ENCODE measurements at regions of chrX and their contacts with region 1.

Region 1: GRCh38 chrX:24054182-24055042 is at the start of gene EIF2S3:
- DNase-seq: peak; percentile 69 to 94 (median 86)
- ATAC-seq: peak; percentile 82
- H3K4me3 ChIP-seq: peak within 1 kb of the TSS; percentile 87 to 92
- H3K4me3 Mint-ChIP-seq: no peak within 1 kb of the TSS
- H3K27ac ChIP-seq: peak within 1 kb of the TSS; percentile 91 to 96
- H3K27ac Mint-ChIP-seq: peak within 1 kb of the TSS; percentile 99
- H3K4me1 ChIP-seq: peaks cover 3% of the 10 kb centered on the region
- H3K4me1 Mint-ChIP-seq: peaks cover 6% of the 10 kb centered on the region
- H3K27me3 ChIP-seq: no peaks in the 10 kb centered on the region
- H3K27me3 Mint-ChIP-seq: no peaks in the 10 kb centered on the region
- CTCF ChIP-seq: no peak
- total RNA-seq, gene EIF2S3: 180 to 184 TPM

Region 2: GRCh38 chrX:23667239-23668177 is 386.9 kb before region 1 on chrX and contains the start of gene PRDX4:
- CTCF ChIA-PET with region 1: no interaction called
- POLR2A ChIA-PET with region 1: no interaction called
- intact Hi-C with region 1: loop called in 1 of 2 experiments (anchors 1 kb)
- DNase-seq: peak; percentile 37 to 84 (median 64)
- ATAC-seq: peak; percentile 85
- H3K4me3 ChIP-seq: peak within 1 kb of the TSS; percentile 62 to 67
- H3K4me3 Mint-ChIP-seq: peak within 1 kb of the TSS; percentile 92
- H3K27ac ChIP-seq: peak within 1 kb of the TSS; percentile 66 to 68
- H3K27ac Mint-ChIP-seq: peak within 1 kb of the TSS; percentile 86
- H3K4me1 ChIP-seq: peaks cover 11% of the 10 kb centered on the region
- H3K4me1 Mint-ChIP-seq: peaks cover 25% of the 10 kb centered on the region
- H3K27me3 ChIP-seq: no peaks in the 10 kb centered on the region
- H3K27me3 Mint-ChIP-seq: no peaks in the 10 kb centered on the region
- CTCF ChIP-seq: no peak
- total RNA-seq, gene PRDX4: 2.2 to 3.6 TPM

Region 3: DNA sequence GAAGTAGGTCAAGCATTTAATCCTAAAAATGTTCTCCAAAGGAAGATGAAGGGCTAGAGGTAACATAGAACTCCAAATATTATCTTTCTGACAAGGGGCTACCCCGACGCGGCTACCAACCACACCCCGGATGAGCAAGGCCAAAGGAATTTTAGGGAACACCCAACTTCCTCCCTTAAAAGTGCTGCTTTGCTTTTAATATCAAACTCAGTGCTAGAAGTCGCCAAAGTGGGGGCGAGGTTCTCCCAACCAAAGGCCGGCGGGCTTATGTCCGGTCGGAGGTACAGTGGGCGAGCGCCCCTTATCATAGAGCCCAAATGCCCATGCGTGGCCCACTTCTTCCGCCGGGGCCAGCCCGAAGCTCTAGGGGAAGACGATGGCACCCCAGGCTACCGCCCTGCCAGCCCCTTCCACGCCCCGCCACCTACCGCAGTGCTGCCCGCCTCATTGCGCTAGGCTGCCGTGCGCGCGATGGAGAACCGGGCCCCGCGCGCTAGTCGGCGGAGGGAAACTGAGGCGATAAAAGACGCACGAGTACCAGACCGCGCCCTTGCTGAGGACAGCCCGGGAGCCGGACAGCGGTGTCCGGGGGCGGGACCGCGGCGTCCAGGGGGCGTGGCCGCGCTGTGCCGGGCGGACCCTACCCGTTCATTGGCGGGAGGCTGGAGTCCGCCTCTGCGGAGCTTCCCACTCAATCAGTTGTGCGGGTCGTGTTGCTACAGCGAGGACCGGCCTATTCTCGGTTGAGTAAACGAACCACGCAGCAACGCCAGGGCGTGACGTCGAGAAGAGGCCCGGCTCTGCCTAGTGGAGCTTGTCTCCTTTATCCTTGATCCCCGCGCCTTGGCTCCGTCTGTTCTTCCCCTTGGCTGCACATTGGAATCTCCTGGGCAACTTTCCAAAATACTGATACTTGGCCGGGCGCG is 311.5 kb before region 1 on chrX and contains the start of gene ACOT9:
- CTCF ChIA-PET with region 1: interaction called, 3 read pairs
- POLR2A ChIA-PET with region 1: interaction called, 6 read pairs
- intact Hi-C with region 1: loop called in 1 of 2 experiments (anchors 5 kb)
- DNase-seq: peak; percentile 32 to 83 (median 60)
- ATAC-seq: peak; percentile 87
- H3K4me3 ChIP-seq: peak within 1 kb of the TSS; percentile 72 to 75
- H3K4me3 Mint-ChIP-seq: peak within 1 kb of the TSS; percentile 87
- H3K27ac ChIP-seq: peak within 1 kb of the TSS; percentile 51 to 66
- H3K27ac Mint-ChIP-seq: peak within 1 kb of the TSS; percentile 84
- H3K4me1 ChIP-seq: peaks cover 8% of the 10 kb centered on the region
- H3K4me1 Mint-ChIP-seq: peaks cover 35% of the 10 kb centered on the region
- H3K27me3 ChIP-seq: no peaks in the 10 kb centered on the region
- H3K27me3 Mint-ChIP-seq: no peaks in the 10 kb centered on the region
- CTCF ChIP-seq: no peak
- total RNA-seq, gene ACOT9: 19.3 to 21.3 TPM

Region 4: DNA sequence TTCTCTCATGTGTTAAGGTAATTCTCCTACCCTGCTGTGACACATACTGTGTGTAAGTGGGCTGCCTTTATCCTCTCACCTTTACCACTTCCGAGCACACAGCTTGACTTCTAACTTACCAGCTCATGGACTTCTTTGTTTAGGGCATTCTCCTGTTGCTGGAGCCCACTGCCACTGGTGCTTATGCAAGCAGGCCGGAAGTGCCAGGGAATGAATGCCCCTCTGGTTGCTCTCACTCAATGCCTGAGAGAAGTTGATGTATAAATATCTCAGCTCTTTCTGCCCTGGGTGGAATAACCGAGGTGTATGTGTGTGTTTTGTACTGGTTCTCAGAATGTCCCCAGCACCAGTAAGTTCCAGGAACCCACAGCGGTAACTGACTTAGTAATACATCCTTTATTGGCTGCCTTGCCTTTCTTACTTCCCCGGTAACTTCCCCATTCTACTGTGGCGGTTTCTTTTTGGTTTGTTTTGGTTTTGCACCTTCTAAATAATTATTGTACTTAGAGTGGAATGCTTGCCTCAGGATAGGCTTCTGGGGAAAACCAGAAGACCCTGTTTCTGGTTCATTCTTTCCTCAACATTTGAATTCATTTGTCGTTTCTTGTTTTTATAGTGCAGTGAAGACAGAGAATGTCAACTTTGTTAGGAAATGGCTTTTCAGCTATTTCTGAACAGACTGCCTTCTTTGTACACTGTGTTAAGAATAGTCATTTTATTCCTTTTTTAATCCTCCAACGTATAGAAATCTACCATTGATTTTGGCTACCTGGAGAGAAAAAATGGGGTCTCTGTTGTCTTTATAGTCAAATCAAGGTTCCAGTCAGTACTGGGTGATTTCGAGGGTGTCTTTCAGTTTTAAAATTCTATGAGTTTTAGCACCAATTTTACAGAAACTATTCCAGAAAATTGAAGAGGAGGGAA is 101.2 kb before region 1 on chrX:
- CTCF ChIA-PET with region 1: no interaction called
- POLR2A ChIA-PET with region 1: interaction called, 12 read pairs
- intact Hi-C with region 1: loop called in 1 of 2 experiments (anchors 5 kb)
- DNase-seq: peak; percentile 0 to 72 (median 32)
- ATAC-seq: peak; percentile 83
- H3K4me3 ChIP-seq: peak overlapping the region; percentile 47 to 51
- H3K4me3 Mint-ChIP-seq: peak overlapping the region; percentile 86
- H3K27ac ChIP-seq: peak overlapping the region; percentile 70 to 76
- H3K27ac Mint-ChIP-seq: peak overlapping the region; percentile 95
- H3K4me1 ChIP-seq: peaks cover 11% of the 10 kb centered on the region
- H3K4me1 Mint-ChIP-seq: peaks cover 27% of the 10 kb centered on the region
- H3K27me3 ChIP-seq: no peaks in the 10 kb centered on the region
- H3K27me3 Mint-ChIP-seq: no peaks in the 10 kb centered on the region
- CTCF ChIP-seq: no peak

Region 5: GRCh38 chrX:24150051-24150790 is 95.8 kb after region 1 on chrX:
- CTCF ChIA-PET with region 1: interaction called, 3 read pairs
- POLR2A ChIA-PET with region 1: interaction called, 3 read pairs
- intact Hi-C with region 1: loop called (anchors 1 kb)
- DNase-seq: peak; percentile 61 to 93 (median 83)
- ATAC-seq: peak; percentile 72
- H3K4me3 ChIP-seq: peak overlapping the region; percentile 66 to 75
- H3K4me3 Mint-ChIP-seq: peak overlapping the region; percentile 83
- H3K27ac ChIP-seq: peak overlapping the region; percentile 88
- H3K27ac Mint-ChIP-seq: peak overlapping the region; percentile 93
- H3K4me1 ChIP-seq: peaks cover 32% of the 10 kb centered on the region
- H3K4me1 Mint-ChIP-seq: peaks cover 59% of the 10 kb centered on the region
- H3K27me3 ChIP-seq: no peaks in the 10 kb centered on the region
- H3K27me3 Mint-ChIP-seq: no peaks in the 10 kb centered on the region
- CTCF ChIP-seq: peak; percentile 15

Measured in CD8-positive, alpha-beta T cell (primary cell).